ENCODE measurements at regions of chr4 and their contacts with region 1.

Region 1: GRCh38 chr4:139734875-139735380 is 69.3 kb downstream of the MGST2 start:
- DNase-seq: peak; percentile 95
- H3K4me3 ChIP-seq: peak overlapping the region; percentile 23 to 58 (median 52)
- H3K27ac ChIP-seq: peak overlapping the region; percentile 81 to 90 (median 88)
- H3K4me1 ChIP-seq: peaks cover 0 to 32% (median 23%) of the 10 kb centered on the region in 4 donors
- H3K27me3 ChIP-seq: no peaks in the 10 kb centered on the region
- CTCF ChIP-seq: peak; percentile 55 to 87 (median 63)
- EP300 ChIP-seq: peak in 1 of 4 donors; percentile 31
- POLR2A ChIP-seq: no peak

Region 2: GRCh38 chr4:139815778-139816601 is 81.1 kb after region 1 on chr4:
- intact Hi-C with region 1: loop called (anchors 5 kb)
- DNase-seq: peak; percentile 85
- H3K4me3 ChIP-seq: peak overlapping the region; percentile 24 to 53 (median 48)
- H3K27ac ChIP-seq: peak overlapping the region; percentile 73 to 78 (median 76)
- H3K4me1 ChIP-seq: peaks cover 0 to 32% (median 21%) of the 10 kb centered on the region in 4 donors
- H3K27me3 ChIP-seq: no peaks in the 10 kb centered on the region
- CTCF ChIP-seq: no peak
- EP300 ChIP-seq: no peak
- POLR2A ChIP-seq: no peak

Region 3: DNA sequence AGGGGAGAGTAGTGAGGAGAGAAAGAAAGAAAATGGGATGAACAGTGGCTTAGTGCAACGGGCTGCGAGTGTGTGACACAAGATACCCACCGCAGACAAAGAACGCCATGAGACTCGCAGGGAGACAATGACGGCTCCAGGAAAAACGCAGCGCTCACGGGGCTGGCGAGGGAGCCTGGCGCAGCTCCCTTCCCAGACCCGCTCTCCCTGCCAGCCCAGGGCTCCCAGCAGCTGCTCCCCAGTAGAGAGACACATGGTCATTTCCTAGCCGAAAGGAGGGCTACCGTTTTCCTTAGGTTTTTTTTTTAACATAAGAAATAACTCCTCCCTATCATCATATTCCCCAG is 269.6 kb after region 1 on chr4:
- intact Hi-C with region 1: loop called (anchors 10 kb)
- DNase-seq: peak; percentile 79
- H3K4me3 ChIP-seq: peak overlapping the region; percentile 9 to 46 (median 40)
- H3K27ac ChIP-seq: peak overlapping the region; percentile 7 to 59 (median 54)
- H3K4me1 ChIP-seq: peaks cover 0 to 26% (median 20%) of the 10 kb centered on the region in 4 donors
- H3K27me3 ChIP-seq: no peaks in the 10 kb centered on the region
- CTCF ChIP-seq: no peak
- EP300 ChIP-seq: no peak
- POLR2A ChIP-seq: no peak

Region 4: DNA sequence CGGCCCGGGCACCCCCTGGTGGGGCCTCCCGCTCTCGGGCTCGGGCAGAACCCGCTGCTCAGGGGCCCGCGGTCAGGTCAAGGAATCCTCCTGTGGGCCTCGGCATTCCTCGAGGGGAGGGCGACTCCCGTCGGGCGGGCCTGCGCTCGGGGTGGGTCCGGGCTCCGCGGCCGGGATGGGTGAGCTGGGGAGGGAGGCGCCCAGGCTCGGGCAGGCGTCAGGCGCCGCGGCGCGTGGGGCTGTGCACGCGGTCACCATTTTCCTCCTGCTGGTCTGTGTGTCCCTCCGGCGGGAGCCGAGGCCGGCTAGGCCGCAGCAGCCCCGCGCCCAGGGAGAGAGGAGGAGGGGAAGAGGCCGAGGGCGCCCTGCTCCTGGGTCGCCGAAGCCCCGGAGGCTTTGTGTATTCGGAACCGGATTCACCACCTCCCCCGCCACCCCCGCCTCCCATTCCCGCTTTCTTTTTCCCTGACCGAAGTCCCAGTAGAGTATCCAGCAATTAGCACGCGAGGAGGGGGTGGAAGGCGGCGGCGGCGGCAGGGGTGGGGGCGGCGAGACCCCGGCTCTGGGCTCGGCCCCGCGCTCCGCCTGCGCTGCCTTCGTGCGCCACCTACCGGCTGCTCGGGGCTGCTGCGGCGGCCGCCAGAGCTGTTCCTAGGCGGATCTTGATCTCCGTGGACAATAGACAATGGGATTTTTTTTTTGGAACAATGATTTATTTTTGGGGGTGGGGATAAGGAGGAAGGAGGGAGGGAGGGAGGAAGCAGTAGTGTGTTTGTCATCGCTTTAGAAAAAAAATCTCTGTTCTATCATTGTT is 518.0 kb after region 1 on chr4:
- intact Hi-C with region 1: loop called (anchors 1 kb)
- DNase-seq: peak; percentile 85
- H3K4me3 ChIP-seq: peak overlapping the region; percentile 38 to 66 (median 64)
- H3K27ac ChIP-seq: peak overlapping the region; percentile 88 to 93 (median 92)
- H3K4me1 ChIP-seq: peaks cover 0 to 50% (median 46%) of the 10 kb centered on the region in 4 donors
- H3K27me3 ChIP-seq: no peaks in the 10 kb centered on the region
- CTCF ChIP-seq: peak; percentile 51 to 98 (median 68)
- EP300 ChIP-seq: no peak
- POLR2A ChIP-seq: no peak

Region 5: GRCh38 chr4:140359562-140360427 is 624.9 kb after region 1 on chr4:
- intact Hi-C with region 1: loop called (anchors 1 kb)
- DNase-seq: peak; percentile 85
- H3K4me3 ChIP-seq: no peak overlapping the region
- H3K27ac ChIP-seq: no peak overlapping the region
- H3K4me1 ChIP-seq: no peaks in the 10 kb centered on the region
- H3K27me3 ChIP-seq: no peaks in the 10 kb centered on the region
- CTCF ChIP-seq: peak; percentile 16 to 78 (median 54)
- EP300 ChIP-seq: no peak
- POLR2A ChIP-seq: no peak

Measured in sigmoid colon (tissue), 7 donors.